Heart right ventricle (tissue), 16 donors: ENCODE measurements at regions of chr18 and their contacts with region 1.

Region 1: GRCh38 chr18:26963292-26963691 is 97.8 kb upstream of the AQP4 start:
- DNase-seq: no peak
- ATAC-seq: peak in 6 of 8 donors; percentile 42 to 67 (median 58)
- H3K4me3 ChIP-seq: no peak overlapping the region
- H3K27ac ChIP-seq: no peak overlapping the region
- H3K4me1 ChIP-seq: peaks cover 0 to 11% (median 0%) of the 10 kb centered on the region in 9 donors
- H3K27me3 ChIP-seq: no peaks in the 10 kb centered on the region
- CTCF ChIP-seq: peak in 7 of 9 donors; percentile 30 to 57 (median 46)

Region 2: DNA sequence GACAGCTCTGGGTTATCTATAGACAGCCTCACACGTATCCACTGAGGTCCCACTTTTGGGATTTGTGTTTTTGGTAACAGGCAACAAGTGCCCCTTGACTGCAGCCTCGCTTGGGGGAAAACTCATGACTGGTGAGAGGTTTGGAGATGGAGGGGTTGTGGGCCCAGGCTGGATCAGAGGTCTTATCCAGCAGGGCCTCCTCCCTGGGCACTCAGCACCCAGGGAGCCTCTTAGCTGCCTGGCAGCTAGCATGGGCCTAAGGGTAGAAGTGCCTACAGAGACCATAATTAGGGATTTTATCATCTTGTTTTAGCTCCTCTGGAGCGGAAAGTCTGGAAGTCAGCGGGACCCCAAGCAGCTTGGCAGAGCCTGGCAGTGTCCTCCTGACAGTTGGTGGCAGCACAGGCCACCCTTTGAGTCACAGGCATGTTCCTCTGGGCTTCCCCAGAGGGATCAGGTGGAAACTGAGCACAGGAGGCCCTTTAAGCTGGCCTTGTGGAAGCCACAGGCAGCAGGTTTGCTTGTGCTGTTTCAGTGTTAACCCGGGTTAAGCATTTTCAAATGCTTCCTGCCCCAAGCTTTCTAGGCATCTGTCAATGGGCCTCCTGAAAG is 558.0 kb before region 1 on chr18:
- intact Hi-C with region 1: loop called in 1 of 10 experiments (anchors 5 kb)
- DNase-seq: peak; percentile 33 to 41
- ATAC-seq: peak; percentile 65 to 90 (median 86)
- H3K4me3 ChIP-seq: no peak overlapping the region
- H3K27ac ChIP-seq: no peak overlapping the region
- H3K4me1 ChIP-seq: no peaks in the 10 kb centered on the region
- H3K27me3 ChIP-seq: no peaks in the 10 kb centered on the region
- CTCF ChIP-seq: peak; percentile 14 to 69 (median 55)

Region 3: GRCh38 chr18:26804519-26804918 is 158.8 kb before region 1 on chr18:
- intact Hi-C with region 1: loop called in 2 of 10 experiments (anchors 5 to 10 kb)
- DNase-seq: no peak
- ATAC-seq: peak in 3 of 8 donors; percentile 33 to 41 (median 37)
- H3K4me3 ChIP-seq: no peak overlapping the region
- H3K27ac ChIP-seq: no peak overlapping the region
- H3K4me1 ChIP-seq: no peaks in the 10 kb centered on the region
- H3K27me3 ChIP-seq: peaks cover 0 to 6% (median 0%) of the 10 kb centered on the region in 7 donors
- CTCF ChIP-seq: peak in 7 of 9 donors; percentile 39 to 59 (median 49)

Region 4: GRCh38 chr18:26813043-26813442 is 150.2 kb before region 1 on chr18:
- intact Hi-C with region 1: loop called in 9 of 10 experiments (anchors 2 to 10 kb)
- DNase-seq: peak in 1 of 2 donors; percentile 27
- ATAC-seq: peak in 3 of 8 donors; percentile 73 to 79 (median 78)
- H3K4me3 ChIP-seq: no peak overlapping the region
- H3K27ac ChIP-seq: no peak overlapping the region
- H3K4me1 ChIP-seq: no peaks in the 10 kb centered on the region
- H3K27me3 ChIP-seq: peaks cover 0 to 6% (median 0%) of the 10 kb centered on the region in 7 donors
- CTCF ChIP-seq: peak; percentile 21 to 76 (median 62)

Region 5: GRCh38 chr18:26819046-26819445 is 144.2 kb before region 1 on chr18:
- intact Hi-C with region 1: loop called in 7 of 10 experiments (anchors 2 to 10 kb)
- DNase-seq: no peak
- ATAC-seq: no peak
- H3K4me3 ChIP-seq: no peak overlapping the region
- H3K27ac ChIP-seq: no peak overlapping the region
- H3K4me1 ChIP-seq: no peaks in the 10 kb centered on the region
- H3K27me3 ChIP-seq: no peaks in the 10 kb centered on the region
- CTCF ChIP-seq: no peak

Region 6: GRCh38 chr18:26893996-26894395 is 69.3 kb before region 1 on chr18:
- intact Hi-C with region 1: no loop called
- DNase-seq: no peak
- ATAC-seq: no peak
- H3K4me3 ChIP-seq: no peak overlapping the region
- H3K27ac ChIP-seq: no peak overlapping the region
- H3K4me1 ChIP-seq: no peaks in the 10 kb centered on the region
- H3K27me3 ChIP-seq: no peaks in the 10 kb centered on the region
- CTCF ChIP-seq: no peak